GM18951 (cell line): ENCODE measurements at regions of chr14 and their contacts with region 1.

Region 1: GRCh38 chr14:105666420-105666819 is 140.0 kb downstream of the TMEM121 start:
- POLR2A ChIP-seq: no peak

Region 2: DNA sequence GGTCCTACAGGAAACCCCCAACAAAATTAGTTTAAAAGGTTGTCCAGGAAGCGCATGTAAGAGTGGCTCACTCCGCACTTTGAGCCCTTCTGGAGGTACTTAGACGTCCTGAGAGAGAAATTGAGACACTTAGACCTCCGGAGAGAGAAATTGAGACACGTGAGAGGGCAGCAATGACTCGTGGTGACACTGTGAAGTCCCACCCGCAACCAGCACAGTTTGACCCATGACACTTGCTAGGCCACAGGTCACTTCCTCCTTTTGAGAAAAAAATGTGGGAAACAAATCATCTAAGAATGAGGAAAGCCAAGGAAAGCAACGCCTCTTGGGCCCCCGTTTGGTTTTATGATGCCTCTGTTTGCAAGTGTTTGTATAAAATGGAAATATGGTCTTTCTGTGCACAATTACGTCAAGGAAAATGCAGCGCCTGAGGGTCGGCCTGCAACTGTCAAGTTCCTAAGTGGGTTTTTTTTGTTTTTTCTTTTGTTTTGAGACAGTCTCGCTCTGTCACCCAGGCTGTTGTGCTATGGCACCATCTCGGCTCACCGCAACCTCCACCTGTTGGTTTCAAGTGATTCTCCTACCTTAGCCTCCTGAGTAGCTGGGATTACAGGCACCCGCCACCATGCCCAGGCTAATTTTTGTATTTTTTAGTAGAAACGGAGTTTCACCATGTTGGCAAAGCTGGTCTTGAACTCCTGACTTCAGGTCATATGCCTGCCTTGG is 631.9 kb before region 1 on chr14:
- in situ Hi-C with region 1: no loop called
- POLR2A ChIP-seq: no peak

Region 3: DNA sequence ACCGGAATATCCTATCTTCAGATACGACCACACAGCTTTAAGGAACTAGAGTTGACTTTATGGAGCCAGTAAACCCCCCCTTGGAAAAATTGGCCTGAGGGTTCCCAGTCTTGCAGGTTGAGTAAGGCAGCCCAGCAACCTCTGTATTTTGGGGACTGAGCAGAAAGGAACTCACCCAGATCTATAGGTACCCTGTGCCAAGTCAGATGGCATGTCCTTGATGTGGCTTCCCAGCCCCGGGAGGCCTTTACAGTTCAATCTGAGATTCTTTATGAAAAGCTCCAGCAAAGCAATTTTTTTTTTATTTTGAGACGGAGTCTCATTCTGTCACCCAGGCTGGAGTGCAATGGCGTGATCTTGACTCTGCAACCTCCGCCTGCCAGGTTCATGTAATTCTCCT is 112.4 kb before region 1 on chr14:
- in situ Hi-C with region 1: loop called (anchors 5 kb)
- POLR2A ChIP-seq: no peak

Region 4: DNA sequence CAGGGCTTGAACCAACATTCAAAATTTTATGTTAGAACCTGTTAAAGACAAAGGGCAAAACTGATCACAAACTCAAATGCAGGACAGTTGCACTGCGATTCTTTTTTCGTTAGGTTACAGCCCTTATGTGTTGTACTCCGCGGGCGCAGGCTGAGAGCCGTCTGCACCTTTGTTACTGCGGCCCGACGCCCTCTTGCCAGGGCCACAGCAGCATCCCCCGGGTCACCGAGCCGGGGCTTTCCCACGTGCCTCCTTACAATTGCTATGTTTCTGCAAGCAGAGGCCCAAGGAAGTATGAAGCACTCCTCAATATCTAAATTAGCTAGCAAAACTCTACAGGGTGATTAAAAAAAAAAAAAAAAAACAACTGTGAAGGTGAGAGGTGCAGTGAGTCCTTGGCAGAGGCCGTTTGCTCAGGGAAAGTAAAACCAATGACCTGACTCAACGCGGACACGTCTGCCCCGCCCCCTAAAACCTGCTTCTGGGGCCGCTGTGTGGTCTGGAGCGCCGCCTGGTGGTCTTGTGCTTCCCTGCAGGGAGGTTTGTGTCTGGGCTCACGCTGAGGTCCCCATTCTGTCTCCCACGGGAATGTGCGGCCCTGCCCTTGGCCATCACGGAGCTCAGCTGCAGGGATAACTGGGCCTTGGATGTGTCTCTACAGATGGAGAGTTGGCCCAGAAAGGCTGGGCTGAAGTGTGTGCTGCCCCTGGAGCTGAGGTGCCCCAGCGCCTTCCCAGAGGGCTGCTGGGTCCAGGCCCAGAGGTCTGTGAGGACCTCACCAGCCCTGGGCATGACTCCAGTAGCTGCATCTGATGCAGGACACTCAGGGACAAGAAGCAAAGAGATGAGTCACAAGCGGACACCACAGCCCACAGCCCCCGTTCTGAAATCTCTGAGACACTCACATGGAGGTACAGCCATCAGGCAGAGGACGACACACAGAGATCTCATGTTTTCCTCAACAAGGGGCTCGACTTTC is 278.5 kb after region 1 on chr14:
- in situ Hi-C with region 1: loop called (anchors 25 kb)
- POLR2A ChIP-seq: no peak

Region 5: GRCh38 chr14:106218174-106218573 is 551.8 kb after region 1 on chr14:
- in situ Hi-C with region 1: no loop called
- POLR2A ChIP-seq: no peak